ENCODE measurements at regions of chr15 and their contacts with region 1.

Region 1: GRCh38 chr15:31391687-31392671 is 65.3 kb downstream of the KLF13 start:
- DNase-seq: peak; percentile 96
- H3K4me3 ChIP-seq: peak overlapping the region; percentile 56 to 76 (median 66)
- H3K27ac ChIP-seq: peak overlapping the region; percentile 85 to 97 (median 92)
- H3K4me1 ChIP-seq: peaks cover 33 to 59% (median 40%) of the 10 kb centered on the region in 4 donors
- H3K27me3 ChIP-seq: no peaks in the 10 kb centered on the region
- CTCF ChIP-seq: peak in 1 of 3 experiments; percentile 18
- EP300 ChIP-seq: peak; percentile 62
- POLR2A ChIP-seq: peak; percentile 96

Region 2: GRCh38 chr15:31215490-31216214 is 176.3 kb before region 1 on chr15:
- intact Hi-C with region 1: loop called (anchors 10 kb)
- DNase-seq: no peak
- H3K4me3 ChIP-seq: peak overlapping the region; percentile 62 to 76 (median 68)
- H3K27ac ChIP-seq: peak overlapping the region; percentile 86 to 97 (median 93)
- H3K4me1 ChIP-seq: peaks cover 29 to 49% (median 47%) of the 10 kb centered on the region in 4 donors
- H3K27me3 ChIP-seq: no peaks in the 10 kb centered on the region
- CTCF ChIP-seq: peak; percentile 88 to 93 (median 91)
- EP300 ChIP-seq: no peak
- POLR2A ChIP-seq: peak; percentile 16

Region 3: DNA sequence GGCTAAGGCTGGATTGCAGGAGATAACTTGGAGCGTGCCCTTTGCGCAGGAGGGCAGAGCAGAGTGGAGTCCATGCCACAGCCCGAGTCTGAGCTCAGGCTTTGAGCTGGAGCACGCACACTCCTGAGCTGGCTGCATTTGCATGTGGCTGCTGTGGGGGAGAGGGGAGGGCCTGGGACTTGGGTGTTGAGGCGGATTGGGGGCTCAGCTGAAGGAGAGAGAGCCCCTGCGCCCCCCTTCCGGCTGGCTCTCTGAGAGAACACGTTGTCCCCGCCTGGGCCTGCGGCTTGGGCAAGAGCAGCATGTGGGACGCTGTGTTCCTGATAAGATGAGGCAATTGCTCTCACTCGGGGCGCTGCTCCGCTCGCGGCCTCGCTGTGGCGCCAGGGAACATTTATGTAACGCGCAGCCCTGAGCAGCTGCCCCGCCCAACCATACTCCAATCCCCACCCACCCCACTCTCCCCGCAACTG is 26.3 kb before region 1 on chr15:
- intact Hi-C with region 1: loop called (anchors 2 kb)
- DNase-seq: peak; percentile 99
- H3K4me3 ChIP-seq: peak overlapping the region; percentile 48 to 56 (median 53)
- H3K27ac ChIP-seq: peak overlapping the region; percentile 92 to 93 (median 92)
- H3K4me1 ChIP-seq: peaks cover 83 to 94% (median 92%) of the 10 kb centered on the region in 4 donors
- H3K27me3 ChIP-seq: no peaks in the 10 kb centered on the region
- CTCF ChIP-seq: peak in 2 of 3 experiments; percentile 44 to 56
- EP300 ChIP-seq: peak; percentile 100
- POLR2A ChIP-seq: no peak

Region 4: DNA sequence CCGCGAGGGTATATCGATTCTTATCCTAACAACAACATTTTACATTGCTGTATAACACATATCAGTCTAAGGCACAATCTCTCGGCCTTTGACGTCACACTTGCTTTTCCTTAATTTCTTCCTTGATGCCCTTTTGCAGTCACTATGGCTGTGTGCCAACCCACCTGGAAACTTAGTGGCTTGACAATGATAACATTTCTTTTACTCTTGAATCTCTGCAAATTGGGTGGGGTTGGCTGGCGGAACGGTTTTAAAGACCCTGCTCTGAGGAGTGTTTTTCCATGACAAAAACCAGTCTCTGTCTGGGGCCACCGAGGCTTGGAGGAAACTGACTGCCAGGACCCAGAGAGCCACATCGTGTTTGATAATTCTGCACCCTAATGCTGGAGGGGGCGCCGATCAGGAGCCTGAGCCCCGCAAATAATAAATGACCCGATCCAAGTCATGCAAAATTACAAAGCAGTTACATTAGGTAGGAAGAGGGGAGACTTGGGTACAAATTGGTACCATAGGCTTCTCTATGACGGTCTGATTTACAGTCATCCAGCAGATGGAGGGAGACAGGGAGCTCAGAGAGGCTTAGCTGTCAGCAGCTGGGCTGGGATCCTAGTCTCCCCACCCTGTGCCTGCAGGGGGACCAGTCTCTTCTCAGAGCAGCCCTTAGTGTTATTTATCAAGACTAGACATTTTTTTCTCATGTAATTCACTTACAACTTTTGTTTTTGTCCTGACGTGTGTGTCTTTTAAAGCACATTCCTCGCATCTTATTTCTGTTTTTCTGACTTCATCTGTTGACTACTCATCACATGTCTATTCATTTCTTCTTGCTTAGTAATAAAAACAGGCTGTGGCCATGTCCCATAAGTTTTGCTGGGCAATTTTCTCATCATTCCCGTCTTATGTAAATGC is 50.5 kb after region 1 on chr15:
- intact Hi-C with region 1: loop called (anchors 10 kb)
- DNase-seq: no peak
- H3K4me3 ChIP-seq: no peak overlapping the region
- H3K27ac ChIP-seq: peak overlapping the region; percentile 29 to 81 (median 60)
- H3K4me1 ChIP-seq: peaks cover 11 to 24% (median 22%) of the 10 kb centered on the region in 4 donors
- H3K27me3 ChIP-seq: no peaks in the 10 kb centered on the region
- CTCF ChIP-seq: no peak
- EP300 ChIP-seq: no peak
- POLR2A ChIP-seq: no peak

Region 5: DNA sequence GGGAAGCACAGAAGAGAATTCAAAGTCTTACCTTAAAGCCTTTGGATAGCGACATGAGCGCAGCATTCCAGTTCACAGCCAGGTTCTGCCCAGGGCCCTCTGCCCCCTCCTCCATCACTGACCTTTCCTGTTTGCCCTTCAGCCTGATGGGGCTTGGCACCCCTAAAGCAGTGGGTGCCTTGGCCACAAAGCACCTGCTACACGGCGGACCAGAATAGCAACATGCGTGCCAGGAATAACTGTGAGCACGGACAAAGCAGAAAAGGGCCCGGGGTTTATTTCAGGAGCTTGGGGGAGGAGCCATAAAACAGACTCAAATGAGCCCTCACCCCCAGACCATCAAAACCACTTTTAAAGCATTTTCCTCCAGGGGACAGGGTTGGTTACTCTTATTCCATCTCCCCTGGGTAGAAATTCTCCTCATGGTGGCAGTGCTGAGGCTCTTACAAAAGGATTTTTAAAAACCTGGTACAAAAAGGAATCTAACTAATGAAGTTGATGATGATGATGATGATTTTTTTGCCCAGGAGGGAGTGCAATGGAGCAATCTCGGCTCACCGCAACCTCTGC is 70.0 kb after region 1 on chr15:
- intact Hi-C with region 1: no loop called
- DNase-seq: no peak
- H3K4me3 ChIP-seq: no peak overlapping the region
- H3K27ac ChIP-seq: no peak overlapping the region
- H3K4me1 ChIP-seq: peaks cover 0 to 4% (median 4%) of the 10 kb centered on the region in 4 donors
- H3K27me3 ChIP-seq: peaks cover 0 to 4% (median 0%) of the 10 kb centered on the region in 4 donors
- CTCF ChIP-seq: no peak
- EP300 ChIP-seq: no peak
- POLR2A ChIP-seq: no peak

Measured in esophagus muscularis mucosa (tissue), 4 donors.